RWPE1 (cell line): ENCODE measurements at regions of chrX and their contacts with region 1.

Region 1: GRCh38 chrX:130028196-130028595 is 45.8 kb downstream of the BCORL1 start:
- DNase-seq: peak; percentile 4
- H3K27ac ChIP-seq: no peak overlapping the region
- CTCF ChIP-seq: peak; percentile 38; the same call in 1 of the 2 replicates

Region 2: GRCh38 chrX:129925305-129926092 is 102.7 kb before region 1 on chrX:
- CTCF ChIA-PET with region 1: interaction called, 12 read pairs
- POLR2A ChIA-PET with region 1: no interaction called
- DNase-seq: no peak
- H3K27ac ChIP-seq: no peak overlapping the region
- CTCF ChIP-seq: peak; percentile 48